Right ventricle myocardium inferior (tissue), 1 donor: ENCODE measurements at regions of chr12 and their contacts with region 1.

Region 1: GRCh38 chr12:6069437-6070107 is 54.9 kb downstream of the VWF start:
- DNase-seq: no peak
- ATAC-seq: no peak

Region 2: GRCh38 chr12:5977556-5977955 is 92.0 kb before region 1 on chr12:
- intact Hi-C with region 1: no loop called
- DNase-seq: no peak
- ATAC-seq: no peak

Region 3: DNA sequence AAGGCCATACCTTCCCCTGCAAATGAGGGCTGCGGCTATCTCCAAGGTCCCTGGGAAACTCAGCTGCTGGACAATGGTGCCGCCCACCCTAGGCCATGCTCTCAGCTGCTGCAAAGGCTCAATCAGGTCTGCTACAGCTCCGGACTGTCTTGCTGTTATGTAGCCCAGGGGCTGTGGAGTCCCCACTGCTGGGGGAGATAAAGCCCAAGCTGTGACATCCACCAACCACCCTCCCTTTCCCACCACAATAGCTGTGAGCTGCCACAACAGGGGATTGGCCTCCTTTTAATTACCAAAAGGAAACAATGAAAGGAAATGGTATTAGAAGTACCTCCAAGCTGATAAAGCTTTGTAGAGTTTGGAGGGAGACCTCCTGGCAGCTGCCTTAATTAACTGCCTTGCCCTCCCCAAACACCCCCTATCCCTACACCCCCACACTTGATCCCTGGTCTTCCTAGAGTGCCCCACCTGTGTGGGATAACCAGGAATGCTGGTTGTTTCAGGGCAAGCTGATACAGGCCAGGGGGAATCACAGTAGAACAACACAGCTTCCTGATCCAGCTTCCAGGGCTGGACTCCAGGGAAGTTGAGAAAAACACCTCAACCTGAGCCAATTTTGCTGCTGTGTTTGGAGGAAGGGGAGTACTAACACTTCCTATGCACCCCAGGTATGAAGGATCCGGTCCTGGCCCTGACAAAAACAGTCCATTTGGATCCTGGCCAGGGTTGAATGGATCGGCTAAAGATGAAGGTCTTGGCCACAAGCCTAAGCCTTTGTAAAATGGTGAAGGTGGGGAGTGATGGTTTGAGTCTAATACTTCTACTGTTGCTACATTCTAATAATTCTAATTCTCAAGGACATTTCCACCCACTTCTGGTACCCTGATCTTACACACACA is 55.1 kb after region 1 on chr12 and contains the start of gene VWF:
- intact Hi-C with region 1: loop called (anchors 5 kb)
- DNase-seq: no peak
- ATAC-seq: peak; percentile 42
- total RNA-seq, gene VWF: 244 TPM

Region 4: DNA sequence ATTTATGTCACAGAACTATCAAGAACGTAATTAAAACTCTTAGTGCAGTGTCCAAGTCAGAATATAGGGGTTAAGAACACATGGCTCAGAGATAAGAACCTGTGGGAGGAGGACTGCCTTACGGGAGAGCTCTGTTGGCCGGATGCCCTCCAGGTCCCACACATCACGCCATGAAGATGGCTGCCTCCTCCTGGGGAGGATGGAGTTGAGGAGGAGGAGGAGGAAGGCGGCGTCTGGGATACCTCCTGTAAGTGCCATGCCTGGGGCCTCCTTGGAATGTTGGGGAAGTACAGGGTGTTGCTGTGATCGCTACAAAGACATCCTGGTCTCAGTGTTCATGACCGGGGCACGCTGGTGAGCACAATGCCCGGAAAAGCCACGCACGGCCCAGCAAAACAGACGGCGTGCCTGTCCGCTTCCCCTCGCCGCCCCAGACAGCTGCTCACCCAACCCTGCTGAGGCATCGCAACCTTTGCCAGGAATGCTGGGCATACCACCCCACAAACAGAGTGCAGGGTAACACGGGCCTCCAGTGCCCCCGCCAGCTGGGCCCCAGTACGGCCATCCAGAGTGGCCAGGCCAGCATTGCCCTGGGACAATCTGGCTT is 101.9 kb after region 1 on chr12:
- intact Hi-C with region 1: loop called (anchors 5 kb)
- DNase-seq: no peak
- ATAC-seq: peak; percentile 64

Region 5: GRCh38 chr12:6278439-6279255 is 209.1 kb after region 1 on chr12:
- intact Hi-C with region 1: loop called (anchors 5 kb)
- DNase-seq: peak; percentile 92
- ATAC-seq: peak; percentile 95